Activated CD4-positive, alpha-beta memory T cell treated with anti-CD3 and anti-CD28 coated beads, Interleukin-2, amount 10 ng/mL, durations not matched to agents 7 days and 5 days (primary cell): ENCODE measurements at regions of chr4 and their contacts with region 1.

Region 1: GRCh38 chr4:17587094-17587822 is 10.3 kb downstream of the LAP3 start:
- DNase-seq: no peak
- H3K4me3 Mint-ChIP-seq: no peak overlapping the region
- H3K27ac Mint-ChIP-seq: no peak overlapping the region
- H3K4me1 Mint-ChIP-seq: peaks cover 22% of the 10 kb centered on the region
- H3K27me3 Mint-ChIP-seq: no peaks in the 10 kb centered on the region

Region 2: DNA sequence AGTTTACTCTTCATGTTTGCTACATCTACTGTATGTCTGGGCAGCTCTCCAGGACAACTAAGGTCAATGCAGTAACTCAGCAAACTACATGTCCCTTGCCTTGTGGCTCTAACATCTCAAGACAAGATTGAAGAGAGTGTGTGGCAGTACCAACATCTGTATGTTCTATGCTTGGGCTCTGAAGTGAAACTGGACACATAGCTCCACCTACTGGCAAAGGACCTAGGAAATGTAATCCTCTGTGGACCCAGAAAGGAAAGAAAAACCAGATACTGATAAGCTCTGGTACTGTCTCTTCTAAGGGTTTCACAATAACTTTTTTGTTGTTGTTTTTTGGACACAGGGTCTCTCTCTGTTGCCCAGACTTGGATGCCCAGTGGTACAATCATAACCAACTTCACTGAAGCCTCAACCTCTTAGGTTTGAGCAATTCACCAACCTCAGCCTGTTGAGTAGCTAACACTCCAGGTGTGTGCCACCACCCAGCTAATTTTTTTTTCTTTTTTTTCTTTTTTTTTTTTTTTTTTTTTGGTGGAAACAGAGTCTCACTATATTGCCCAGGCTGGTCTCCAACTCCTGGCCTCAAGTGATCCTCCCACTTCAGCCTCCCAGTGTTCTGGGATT is 139.5 kb before region 1 on chr4:
- CTCF ChIA-PET with region 1: no interaction called
- POLR2A ChIA-PET with region 1: no interaction called
- DNase-seq: peak; percentile 60
- H3K4me3 Mint-ChIP-seq: no peak overlapping the region
- H3K27ac Mint-ChIP-seq: no peak overlapping the region
- H3K4me1 Mint-ChIP-seq: no peaks in the 10 kb centered on the region
- H3K27me3 Mint-ChIP-seq: peaks cover 7% of the 10 kb centered on the region

Region 3: DNA sequence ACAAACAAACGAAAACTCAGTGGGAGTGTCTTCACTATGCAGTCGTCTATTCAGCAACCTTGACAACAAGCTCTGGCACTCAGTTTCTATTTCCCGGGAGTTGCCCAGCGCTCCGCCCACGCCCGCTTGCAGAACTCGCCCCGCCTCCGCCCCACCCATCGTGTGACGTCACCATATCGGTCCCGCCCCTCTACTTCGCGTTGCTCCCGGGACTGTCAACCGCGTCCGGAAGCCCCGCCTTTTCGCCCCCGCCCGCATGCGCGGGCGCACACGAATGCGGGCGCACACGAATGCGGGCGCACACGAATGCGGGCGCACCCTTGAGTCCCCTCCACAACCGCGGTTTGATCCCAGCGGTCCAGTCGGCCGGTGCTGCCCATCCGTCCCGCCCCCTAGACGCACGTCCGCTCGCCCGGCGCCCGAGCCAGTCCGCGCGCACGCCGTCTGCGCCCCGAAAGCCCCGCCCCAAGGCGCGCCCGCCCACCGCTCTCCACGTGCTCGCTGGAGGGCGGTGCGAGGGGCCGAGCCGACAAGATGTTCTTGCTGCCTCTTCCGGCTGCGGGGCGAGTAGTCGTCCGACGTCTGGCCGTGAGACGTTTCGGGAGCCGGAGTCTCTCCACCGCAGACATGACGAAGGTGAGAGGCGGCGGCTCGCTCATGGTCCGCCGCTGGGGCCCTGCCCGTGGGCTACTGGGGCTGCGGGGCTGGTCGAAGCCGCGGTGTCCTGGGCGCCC is 10.2 kb before region 1 on chr4 and contains the start of gene LAP3:
- CTCF ChIA-PET with region 1: no interaction called
- POLR2A ChIA-PET with region 1: interaction called, 13 read pairs
- DNase-seq: peak; percentile 99
- H3K4me3 Mint-ChIP-seq: peak within 1 kb of the TSS; percentile 97
- H3K27ac Mint-ChIP-seq: peak within 1 kb of the TSS; percentile 99
- H3K4me1 Mint-ChIP-seq: peaks cover 43% of the 10 kb centered on the region
- H3K27me3 Mint-ChIP-seq: no peaks in the 10 kb centered on the region
- total RNA-seq, gene LAP3: 180 to 182 TPM

Region 4: DNA sequence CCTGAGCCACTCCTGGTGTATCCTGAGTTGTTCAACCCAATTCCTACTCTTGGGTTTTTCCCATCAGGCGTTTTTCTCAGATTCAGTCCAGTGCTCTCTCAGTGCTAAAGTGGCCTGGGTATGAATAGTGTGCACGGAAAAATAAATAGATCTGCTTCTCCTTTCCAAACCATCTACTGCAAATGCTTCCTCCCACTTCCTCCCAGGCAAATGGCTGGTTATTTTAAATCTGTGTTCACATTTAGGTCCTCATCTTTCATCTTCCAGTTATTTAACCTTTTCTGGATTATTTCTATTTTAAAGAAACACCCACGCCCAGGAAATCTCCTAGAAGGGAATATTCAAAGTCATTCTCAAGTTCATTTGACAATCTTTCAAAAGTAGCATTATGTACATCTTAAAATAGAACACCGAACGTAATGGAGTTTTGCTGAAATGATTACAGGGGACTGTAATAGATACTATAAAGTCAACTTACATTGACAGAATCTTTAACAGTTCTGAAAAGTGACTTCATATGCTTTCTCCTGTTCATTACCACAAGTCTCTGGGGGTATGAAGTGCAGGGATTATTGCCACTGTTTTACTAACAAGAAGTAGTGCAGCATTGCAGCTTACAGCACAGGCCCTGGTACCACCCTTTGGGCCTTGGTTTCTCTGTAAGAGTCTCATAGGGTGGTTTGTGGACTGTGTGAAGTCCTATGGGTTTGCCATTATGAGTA is 93.5 kb after region 1 on chr4:
- CTCF ChIA-PET with region 1: no interaction called
- POLR2A ChIA-PET with region 1: no interaction called
- DNase-seq: no peak
- H3K4me3 Mint-ChIP-seq: no peak overlapping the region
- H3K27ac Mint-ChIP-seq: no peak overlapping the region
- H3K4me1 Mint-ChIP-seq: no peaks in the 10 kb centered on the region
- H3K27me3 Mint-ChIP-seq: peaks cover 13% of the 10 kb centered on the region